Testis (tissue), 5 donors: ENCODE measurements at regions of chr17 and their contacts with region 1.

Region 1: GRCh38 chr17:45235416-45236281 is 14.0 kb downstream of the FMNL1 start:
- DNase-seq: peak; percentile 90
- H3K4me3 ChIP-seq: no peak overlapping the region
- H3K27ac ChIP-seq: no peak overlapping the region
- H3K4me1 ChIP-seq: peaks cover 3% of the 10 kb centered on the region
- H3K27me3 ChIP-seq: no peaks in the 10 kb centered on the region
- CTCF ChIP-seq: peak; percentile 45 to 76 (median 74)
- POLR2A ChIP-seq: no peak

Region 2: GRCh38 chr17:45385331-45385997 is 149.8 kb after region 1 on chr17:
- intact Hi-C with region 1: loop called (anchors 10 kb)
- DNase-seq: peak; percentile 89
- H3K4me3 ChIP-seq: no peak overlapping the region
- H3K27ac ChIP-seq: no peak overlapping the region
- H3K4me1 ChIP-seq: no peaks in the 10 kb centered on the region
- H3K27me3 ChIP-seq: no peaks in the 10 kb centered on the region
- CTCF ChIP-seq: peak; percentile 96 to 98 (median 96)
- POLR2A ChIP-seq: no peak